Testis (tissue), 5 donors: ENCODE measurements at regions of chr2 and their contacts with region 1.

Region 1: GRCh38 chr2:118855451-118856279 is 8.2 kb upstream of the EN1 start:
- DNase-seq: peak; percentile 88
- H3K4me3 ChIP-seq: peak overlapping the region; percentile 36 to 44
- H3K27ac ChIP-seq: no peak overlapping the region
- H3K4me1 ChIP-seq: peaks cover 14% of the 10 kb centered on the region
- H3K27me3 ChIP-seq: peaks cover 6% of the 10 kb centered on the region
- CTCF ChIP-seq: peak; percentile 93 to 96 (median 94)
- POLR2A ChIP-seq: no peak

Region 2: DNA sequence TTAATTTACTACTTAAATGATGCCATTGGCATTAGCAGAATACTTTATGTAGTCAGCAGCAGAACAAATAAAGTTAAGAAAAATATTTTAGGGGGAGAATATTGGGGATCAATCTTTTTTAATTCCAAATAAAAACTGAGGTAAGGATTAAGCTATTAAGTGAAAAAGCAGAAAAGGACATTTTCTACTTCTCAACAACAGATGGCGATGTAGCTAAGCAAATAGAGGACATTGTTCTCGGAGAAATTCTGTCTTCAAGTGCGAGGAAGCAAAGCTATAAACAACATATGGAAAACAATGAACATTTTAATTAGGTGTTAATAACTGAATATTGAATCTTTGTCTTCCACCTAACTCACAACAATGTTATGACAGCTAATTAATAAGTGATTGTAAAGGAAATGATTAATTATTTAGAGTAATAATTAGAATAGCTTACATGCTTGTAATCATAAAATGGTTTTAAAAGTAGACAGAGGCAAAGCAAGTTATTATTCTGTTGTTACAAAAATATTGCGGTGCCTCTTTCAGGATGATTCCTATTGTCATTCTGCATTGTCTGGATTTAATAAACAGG is 808.9 kb before region 1 on chr2:
- intact Hi-C with region 1: loop called (anchors 10 kb)
- DNase-seq: no peak
- H3K4me3 ChIP-seq: no peak overlapping the region
- H3K27ac ChIP-seq: no peak overlapping the region
- H3K4me1 ChIP-seq: no peaks in the 10 kb centered on the region
- H3K27me3 ChIP-seq: no peaks in the 10 kb centered on the region
- CTCF ChIP-seq: peak; percentile 31 to 36 (median 33)
- POLR2A ChIP-seq: no peak

Region 3: GRCh38 chr2:118221666-118222594 is 633.7 kb before region 1 on chr2:
- intact Hi-C with region 1: loop called (anchors 10 kb)
- DNase-seq: peak; percentile 61
- H3K4me3 ChIP-seq: no peak overlapping the region
- H3K27ac ChIP-seq: no peak overlapping the region
- H3K4me1 ChIP-seq: no peaks in the 10 kb centered on the region
- H3K27me3 ChIP-seq: no peaks in the 10 kb centered on the region
- CTCF ChIP-seq: peak in 2 of 3 experiments; percentile 50 to 59
- POLR2A ChIP-seq: no peak